Activated CD4-positive, alpha-beta memory T cell treated with anti-CD3 and anti-CD28 coated beads for 36 hours (primary cell): ENCODE measurements at regions of chr19 and their contacts with region 1.

Region 1: GRCh38 chr19:36687214-36688056 is at the start of gene ZNF567:
- DNase-seq: peak; percentile 99
- H3K4me3 Mint-ChIP-seq: peak within 1 kb of the TSS; percentile 99
- H3K27ac Mint-ChIP-seq: peak within 1 kb of the TSS; percentile 90
- H3K4me1 Mint-ChIP-seq: peaks cover 24% of the 10 kb centered on the region
- H3K27me3 Mint-ChIP-seq: no peaks in the 10 kb centered on the region
- total RNA-seq, gene ZNF567: 4.9 to 5.3 TPM

Region 2: GRCh38 chr19:36418287-36419001 is 269.0 kb before region 1 on chr19 and contains the start of gene ZFP82:
- CTCF ChIA-PET with region 1: no interaction called
- POLR2A ChIA-PET with region 1: no interaction called
- intact Hi-C with region 1: loop called (anchors 2 kb)
- DNase-seq: peak; percentile 83
- H3K4me3 Mint-ChIP-seq: peak within 1 kb of the TSS; percentile 91
- H3K27ac Mint-ChIP-seq: peak within 1 kb of the TSS; percentile 89
- H3K4me1 Mint-ChIP-seq: peaks cover 26% of the 10 kb centered on the region
- H3K27me3 Mint-ChIP-seq: peaks cover 15% of the 10 kb centered on the region
- total RNA-seq, gene ZFP82: 3.7 to 3.9 TPM

Region 3: GRCh38 chr19:36605101-36605876 is 82.1 kb before region 1 on chr19 and contains the start of gene ZNF382:
- CTCF ChIA-PET with region 1: no interaction called
- POLR2A ChIA-PET with region 1: no interaction called
- intact Hi-C with region 1: loop called (anchors 1 kb)
- DNase-seq: peak; percentile 90
- H3K4me3 Mint-ChIP-seq: peak within 1 kb of the TSS; percentile 92
- H3K27ac Mint-ChIP-seq: peak within 1 kb of the TSS; percentile 95
- H3K4me1 Mint-ChIP-seq: peaks cover 24% of the 10 kb centered on the region
- H3K27me3 Mint-ChIP-seq: no peaks in the 10 kb centered on the region
- total RNA-seq, gene ZNF382: 10.9 to 14.8 TPM

Region 4: GRCh38 chr19:36665832-36666231 is 21.6 kb before region 1 on chr19:
- CTCF ChIA-PET with region 1: no interaction called
- POLR2A ChIA-PET with region 1: interaction called, 4 read pairs
- intact Hi-C with region 1: loop called (anchors 1 kb)
- DNase-seq: no peak
- H3K4me3 Mint-ChIP-seq: peak overlapping the region; percentile 94
- H3K27ac Mint-ChIP-seq: peak overlapping the region; percentile 61
- H3K4me1 Mint-ChIP-seq: peaks cover 28% of the 10 kb centered on the region
- H3K27me3 Mint-ChIP-seq: no peaks in the 10 kb centered on the region

Region 5: GRCh38 chr19:36772311-36773222 is 85.1 kb after region 1 on chr19 and contains the start of gene ZNF850:
- CTCF ChIA-PET with region 1: no interaction called
- POLR2A ChIA-PET with region 1: no interaction called
- intact Hi-C with region 1: loop called (anchors 5 kb)
- DNase-seq: peak; percentile 95
- H3K4me3 Mint-ChIP-seq: peak within 1 kb of the TSS; percentile 91
- H3K27ac Mint-ChIP-seq: peak within 1 kb of the TSS; percentile 83
- H3K4me1 Mint-ChIP-seq: peaks cover 21% of the 10 kb centered on the region
- H3K27me3 Mint-ChIP-seq: no peaks in the 10 kb centered on the region
- total RNA-seq, gene ZNF850: 6.7 TPM

Region 6: GRCh38 chr19:36837906-36838783 is 150.7 kb after region 1 on chr19 and contains the start of gene ZNF790:
- CTCF ChIA-PET with region 1: no interaction called
- POLR2A ChIA-PET with region 1: no interaction called
- intact Hi-C with region 1: loop called (anchors 1 kb)
- DNase-seq: peak; percentile 93
- H3K4me3 Mint-ChIP-seq: no peak within 1 kb of the TSS
- H3K27ac Mint-ChIP-seq: no peak within 1 kb of the TSS
- H3K4me1 Mint-ChIP-seq: peaks cover 6% of the 10 kb centered on the region
- H3K27me3 Mint-ChIP-seq: no peaks in the 10 kb centered on the region
- total RNA-seq, gene ZNF790: 6.1 to 6.9 TPM

Region 7: DNA sequence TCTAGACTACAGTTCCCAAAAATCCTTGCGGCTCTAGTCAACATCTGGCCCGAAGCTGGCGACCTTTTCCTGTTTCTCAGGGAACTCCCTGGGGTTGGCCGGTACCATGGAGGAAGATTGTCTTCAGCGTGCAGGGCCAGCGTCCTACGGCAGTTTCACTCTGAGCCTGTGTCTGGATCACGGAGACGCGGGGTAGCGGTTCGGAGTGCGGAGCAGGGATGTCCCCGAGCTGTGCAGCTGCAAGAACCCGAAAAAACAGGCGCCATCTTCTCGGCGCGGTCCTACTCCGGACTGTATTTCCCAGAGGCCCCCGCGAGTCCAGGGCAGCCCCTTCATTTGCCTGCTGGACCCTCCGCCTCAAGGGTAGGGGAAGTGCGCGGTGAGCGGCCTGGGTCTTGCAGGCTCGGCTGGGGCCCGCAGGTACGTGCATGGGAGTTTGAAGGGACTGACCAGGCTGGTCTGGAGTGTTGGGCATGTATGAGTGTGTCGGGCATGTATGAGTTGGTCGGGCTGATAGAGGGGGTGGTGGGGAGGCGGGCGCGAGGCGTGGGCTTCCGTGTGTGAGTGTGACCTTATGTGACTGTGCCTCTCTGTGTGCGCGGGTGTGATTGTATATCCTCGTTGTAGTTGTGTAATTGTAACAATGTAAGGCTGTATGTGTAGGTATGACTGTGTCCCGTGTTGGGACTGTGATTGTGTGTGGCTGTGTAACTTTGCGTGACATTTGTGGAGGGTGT is 530.6 kb after region 1 on chr19 and contains the start of gene ZNF383:
- CTCF ChIA-PET with region 1: no interaction called
- POLR2A ChIA-PET with region 1: no interaction called
- intact Hi-C with region 1: loop called (anchors 5 kb)
- DNase-seq: peak; percentile 90
- H3K4me3 Mint-ChIP-seq: peak within 1 kb of the TSS; percentile 99
- H3K27ac Mint-ChIP-seq: peak within 1 kb of the TSS; percentile 99
- H3K4me1 Mint-ChIP-seq: peaks cover 19% of the 10 kb centered on the region
- H3K27me3 Mint-ChIP-seq: no peaks in the 10 kb centered on the region
- total RNA-seq, gene ZNF383: 7.7 TPM